ENCODE measurements at regions of chr15 and their contacts with region 1.

Region 1: DNA sequence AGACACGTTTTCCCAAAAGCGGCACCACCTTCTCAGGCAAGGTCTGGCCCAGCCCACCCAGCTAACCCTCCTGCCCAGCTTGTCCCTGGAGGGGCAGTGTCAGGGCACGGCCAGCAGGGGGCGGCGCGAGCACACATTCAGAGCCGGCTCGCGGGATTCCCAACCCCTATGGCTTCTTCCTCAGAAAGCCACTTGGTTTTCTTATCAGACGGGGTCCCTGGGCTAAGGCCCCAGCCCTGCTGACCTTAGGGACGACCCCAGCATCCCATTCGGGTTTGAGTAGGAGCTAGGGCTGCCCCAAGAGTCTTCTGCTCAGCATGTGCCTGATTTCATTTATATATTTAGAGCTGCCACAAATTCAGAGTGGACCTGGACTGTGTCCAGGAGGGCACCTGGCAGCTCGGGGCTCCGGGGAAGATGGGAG is 14.5 kb downstream of the RLBP1 start:
- DNase-seq: peak; percentile 76 to 81 (median 77)
- H3K4me3 ChIP-seq: peak overlapping the region in 4 of 7 experiments; percentile 15 to 68 (median 34)
- H3K27ac ChIP-seq: no peak overlapping the region
- H3K4me1 ChIP-seq: peaks cover 0 to 31% (median 20%) of the 10 kb centered on the region in 4 experiments
- H3K27me3 ChIP-seq: no peaks in the 10 kb centered on the region

Region 2: GRCh38 chr15:88954431-88955277 is 252.3 kb before region 1 on chr15:
- CTCF ChIA-PET with region 1: no interaction called
- POLR2A ChIA-PET with region 1: no interaction called
- DNase-seq: no peak
- H3K4me3 ChIP-seq: no peak overlapping the region
- H3K27ac ChIP-seq: no peak overlapping the region
- H3K4me1 ChIP-seq: peaks cover 0 to 2% (median 0%) of the 10 kb centered on the region in 4 experiments
- H3K27me3 ChIP-seq: no peaks in the 10 kb centered on the region

Region 3: DNA sequence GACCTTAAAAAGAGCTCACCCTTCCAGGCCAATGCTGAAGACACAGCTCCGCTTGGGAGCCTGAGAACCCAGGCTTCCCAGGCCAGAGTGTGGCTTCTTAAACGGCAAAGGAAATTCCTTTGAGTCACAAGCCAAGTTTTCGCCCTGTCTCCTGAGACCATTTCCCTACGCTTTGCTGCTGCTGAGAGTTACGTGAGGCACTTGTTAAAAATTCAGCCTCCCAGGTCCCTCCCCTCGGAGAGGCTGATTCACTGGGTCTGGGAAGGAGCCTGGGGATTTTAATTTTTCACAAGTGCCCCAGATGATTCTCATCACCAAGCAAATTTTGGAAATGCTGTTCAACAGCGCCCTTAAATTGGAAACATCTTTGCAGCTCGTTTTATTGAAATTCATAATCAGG is 11.1 kb before region 1 on chr15:
- CTCF ChIA-PET with region 1: interaction called, 13 read pairs
- POLR2A ChIA-PET with region 1: interaction called, 4 read pairs
- DNase-seq: no peak
- H3K4me3 ChIP-seq: no peak overlapping the region
- H3K27ac ChIP-seq: no peak overlapping the region
- H3K4me1 ChIP-seq: peaks cover 3 to 15% (median 9%) of the 10 kb centered on the region in 4 experiments
- H3K27me3 ChIP-seq: no peaks in the 10 kb centered on the region

Region 4: DNA sequence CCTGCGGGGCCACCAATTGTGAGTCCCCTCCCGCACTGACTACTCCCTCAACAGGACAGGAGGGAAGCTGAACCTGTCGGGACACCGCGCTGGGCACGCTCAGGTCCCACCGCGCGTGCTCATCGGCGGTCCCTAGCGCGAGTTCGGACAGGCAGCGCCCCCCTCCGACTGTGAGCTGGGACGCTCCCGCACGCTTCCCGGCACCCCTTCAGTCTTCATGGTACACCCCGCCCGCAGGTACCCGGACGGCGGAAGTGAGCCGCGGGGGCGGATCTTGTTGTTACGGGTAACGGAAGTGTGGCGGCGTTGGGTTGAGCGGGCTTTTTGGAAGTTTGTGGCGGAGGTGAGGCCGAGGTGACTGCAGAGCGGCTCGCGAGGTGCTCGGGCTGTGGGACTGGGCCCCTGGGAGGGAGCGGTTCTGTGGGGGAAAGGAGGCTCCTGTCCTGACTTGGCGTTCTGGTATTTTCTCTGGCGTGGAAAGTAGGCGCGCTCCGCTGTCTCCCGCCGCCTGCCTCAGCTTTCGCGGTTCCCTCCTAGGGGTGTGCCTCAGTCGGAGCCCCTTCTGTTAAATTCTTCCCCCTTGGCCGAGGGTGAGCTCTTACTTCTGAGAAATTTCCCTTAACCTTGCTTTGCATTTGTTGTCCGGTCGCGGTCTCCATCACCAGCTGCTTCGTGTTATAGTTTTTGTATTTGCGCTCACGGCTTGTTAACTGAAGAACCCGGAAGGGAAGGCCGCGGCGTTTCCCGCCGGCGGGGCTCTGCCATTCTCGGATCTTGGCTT is 37.0 kb after region 1 on chr15 and contains the start of gene FANCI:
- CTCF ChIA-PET with region 1: interaction called, 18 read pairs
- POLR2A ChIA-PET with region 1: interaction called, 3 read pairs
- DNase-seq: peak; percentile 95 to 96 (median 96)
- H3K4me3 ChIP-seq: peak within 1 kb of the TSS; percentile 81 to 100 (median 94)
- H3K27ac ChIP-seq: peak within 1 kb of the TSS; percentile 17 to 71
- H3K4me1 ChIP-seq: peaks cover 6 to 22% (median 11%) of the 10 kb centered on the region in 4 experiments
- H3K27me3 ChIP-seq: peaks cover 0 to 4% (median 0%) of the 10 kb centered on the region in 5 experiments

Measured in common myeloid progenitor, CD34-positive (primary cell).